Activated T-helper 2 cell treated with anti-CD3 and anti-CD28 coated beads, Interferon-gamma antibody, Interleukin-2, Interleukin-4, amounts not matched to agents 10 μg/mL and 5 μg/mL and 100 μg/mL, durations not matched to agents 14 hours and 24 hours and 36 hours (primary cell): ENCODE measurements at regions of chr6 and their contacts with region 1.

Region 1: DNA sequence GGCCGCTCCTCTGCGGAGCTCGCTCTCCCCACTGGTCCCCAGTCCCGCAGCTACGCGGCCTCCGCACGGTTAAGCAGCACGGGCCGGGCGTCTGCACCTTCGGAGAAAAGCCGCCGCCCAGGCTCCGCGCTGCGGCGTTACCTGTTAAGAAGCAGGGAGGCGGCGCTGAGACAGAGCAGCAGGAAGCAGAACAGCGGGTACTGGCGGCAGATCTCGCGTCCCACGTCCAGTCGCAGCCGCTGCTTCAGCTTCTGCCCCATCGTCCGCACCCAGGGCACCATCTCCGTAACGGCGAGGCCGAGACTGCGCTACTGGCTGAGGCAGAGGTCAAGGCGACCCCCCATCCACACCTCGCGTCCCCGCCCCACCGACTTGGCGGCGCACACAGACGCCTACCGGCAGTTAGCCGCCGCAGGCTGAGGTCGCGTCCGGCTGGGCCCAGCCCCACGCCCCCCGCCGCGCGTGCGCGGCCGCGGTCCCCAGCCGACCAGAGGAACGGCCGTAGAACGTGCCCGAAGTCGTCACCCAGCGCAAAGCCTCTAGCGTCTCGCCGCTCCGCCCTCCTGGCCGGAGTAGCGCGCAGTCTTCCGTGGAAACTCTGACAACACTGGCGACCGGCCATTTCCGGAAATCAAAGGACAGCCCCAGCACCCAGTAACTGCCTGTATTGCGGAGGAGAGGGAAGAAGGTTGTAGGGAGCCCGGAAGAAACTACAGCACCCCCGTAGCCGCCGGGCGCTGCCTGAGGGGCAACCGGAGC is at the start of gene SNX14:
- DNase-seq: peak; percentile 76
- H3K4me3 Mint-ChIP-seq: peak within 1 kb of the TSS; percentile 92
- H3K27ac Mint-ChIP-seq: peak within 1 kb of the TSS; percentile 89
- H3K4me1 Mint-ChIP-seq: peaks cover 17% of the 10 kb centered on the region
- H3K27me3 Mint-ChIP-seq: no peaks in the 10 kb centered on the region
- total RNA-seq, gene SNX14: 57.5 and 59.7 TPM in 2 replicates

Region 2: GRCh38 chr6:85096976-85097375 is 496.6 kb before region 1 on chr6:
- intact Hi-C with region 1: no loop called
- DNase-seq: no peak
- H3K4me3 Mint-ChIP-seq: no peak overlapping the region
- H3K27ac Mint-ChIP-seq: no peak overlapping the region
- H3K4me1 Mint-ChIP-seq: no peaks in the 10 kb centered on the region
- H3K27me3 Mint-ChIP-seq: no peaks in the 10 kb centered on the region

Region 3: GRCh38 chr6:85449818-85450759 is 143.5 kb before region 1 on chr6 and contains the start of gene NT5E:
- intact Hi-C with region 1: loop called (anchors 5 kb)
- DNase-seq: peak; percentile 47
- H3K4me3 Mint-ChIP-seq: peak within 1 kb of the TSS; percentile 96
- H3K27ac Mint-ChIP-seq: peak within 1 kb of the TSS; percentile 88
- H3K4me1 Mint-ChIP-seq: peaks cover 63% of the 10 kb centered on the region
- H3K27me3 Mint-ChIP-seq: peaks cover 18% of the 10 kb centered on the region
- total RNA-seq, gene NT5E: 15.4 and 16.4 TPM in 2 replicates

Region 4: DNA sequence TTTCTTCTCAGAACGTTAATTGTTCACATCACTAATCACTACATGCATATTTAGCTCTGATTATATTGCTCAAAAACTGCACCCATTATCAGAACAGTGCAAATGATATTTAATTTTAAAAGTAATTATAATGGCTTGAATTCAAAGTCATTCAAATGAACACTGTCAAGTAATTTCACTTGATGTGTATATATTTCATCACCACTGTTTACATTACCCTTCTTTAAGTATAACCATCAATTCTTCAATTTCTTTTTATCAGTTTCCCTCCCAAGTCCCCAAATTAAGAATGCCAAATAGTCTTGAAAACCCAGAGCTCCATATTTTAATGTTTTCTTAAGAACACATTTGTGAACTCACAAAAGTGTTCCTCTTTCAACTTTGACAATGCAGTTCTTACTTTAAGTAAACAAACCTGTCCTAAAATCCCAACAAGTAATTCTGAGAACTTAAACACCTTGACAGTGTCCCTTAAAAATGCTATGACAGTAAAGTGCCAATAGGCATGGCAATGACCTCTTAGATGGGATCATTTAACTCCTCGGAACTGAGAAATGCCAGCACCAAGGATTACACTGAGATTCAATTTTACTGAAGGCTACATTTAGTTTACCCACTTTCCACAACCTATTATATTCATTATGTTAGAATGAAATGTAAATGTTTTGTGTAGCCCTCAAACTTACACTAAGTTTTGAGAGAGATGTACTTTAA is 16.7 kb after region 1 on chr6:
- intact Hi-C with region 1: loop called (anchors 2 kb)
- DNase-seq: no peak
- H3K4me3 Mint-ChIP-seq: no peak overlapping the region
- H3K27ac Mint-ChIP-seq: no peak overlapping the region
- H3K4me1 Mint-ChIP-seq: peaks cover 10% of the 10 kb centered on the region
- H3K27me3 Mint-ChIP-seq: no peaks in the 10 kb centered on the region

Region 5: DNA sequence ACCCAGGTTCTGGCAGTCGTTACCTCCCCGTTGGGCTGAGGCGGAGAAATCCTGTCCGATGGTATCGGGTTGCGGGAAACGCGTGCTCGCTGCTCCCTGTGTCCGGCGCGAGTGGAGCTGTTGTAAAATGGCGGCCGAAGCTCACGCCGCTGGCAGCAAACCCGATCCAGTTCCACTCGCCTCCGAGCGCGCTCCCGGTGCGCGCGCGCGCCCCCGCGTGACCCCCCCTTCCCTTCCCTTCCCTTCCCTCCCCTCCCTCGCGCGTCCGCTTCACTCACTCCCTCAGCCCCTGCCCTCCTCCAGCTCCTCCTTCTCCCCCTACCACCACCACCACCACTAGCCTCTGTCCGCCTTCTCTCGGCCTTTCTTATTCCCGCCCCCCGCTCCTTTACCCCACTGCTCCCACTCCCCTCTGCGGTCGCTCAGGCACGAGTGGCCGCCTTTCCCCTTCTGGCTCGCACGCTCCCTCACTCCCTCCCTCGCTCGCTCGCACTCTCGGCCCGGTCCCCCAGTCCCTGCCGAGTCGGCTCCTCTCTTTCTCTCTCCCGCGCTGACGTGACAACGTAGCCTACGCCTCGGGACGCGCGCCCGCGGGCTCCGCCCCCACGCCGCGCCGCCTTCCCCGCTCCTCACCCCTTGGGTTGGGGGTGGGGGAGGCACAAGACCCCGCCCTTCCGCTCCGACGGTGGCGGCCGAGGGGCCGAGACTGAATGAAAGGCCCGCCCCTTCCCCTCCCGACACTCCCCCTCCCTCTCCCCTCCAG is 49.3 kb after region 1 on chr6 and contains the start of gene SYNCRIP:
- intact Hi-C with region 1: loop called (anchors 1 kb)
- DNase-seq: peak; percentile 98
- H3K4me3 Mint-ChIP-seq: peak within 1 kb of the TSS; percentile 97
- H3K27ac Mint-ChIP-seq: peak within 1 kb of the TSS; percentile 100
- H3K4me1 Mint-ChIP-seq: peaks cover 41% of the 10 kb centered on the region
- H3K27me3 Mint-ChIP-seq: peaks cover 4% of the 10 kb centered on the region
- total RNA-seq, gene SYNCRIP: 197 TPM in 2 replicates

Region 6: DNA sequence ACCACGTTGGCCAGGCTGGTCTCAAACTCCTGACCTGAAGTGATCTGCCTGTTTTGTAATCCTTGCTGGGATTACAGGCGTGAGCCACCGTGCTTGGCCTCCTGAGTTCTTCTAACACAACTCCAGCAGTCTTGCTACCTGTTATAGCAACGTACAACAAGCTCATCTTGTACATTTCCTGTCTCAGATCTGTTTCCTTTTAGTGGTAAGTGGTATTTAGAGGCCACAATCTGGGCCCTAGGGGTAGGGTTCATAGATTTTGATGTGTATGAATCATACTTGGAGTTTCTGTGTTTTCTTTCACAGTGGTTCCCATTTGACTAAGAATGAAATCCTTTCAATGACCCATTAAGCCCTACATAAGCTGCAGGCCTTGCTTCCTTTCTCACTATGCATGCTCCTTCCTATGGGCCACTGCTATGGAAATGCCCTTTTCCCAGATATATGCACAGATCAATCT is 76.1 kb after region 1 on chr6:
- intact Hi-C with region 1: loop called (anchors 2 kb)
- DNase-seq: peak; percentile 52
- H3K4me3 Mint-ChIP-seq: peak overlapping the region; percentile 61
- H3K27ac Mint-ChIP-seq: peak overlapping the region; percentile 78
- H3K4me1 Mint-ChIP-seq: peaks cover 55% of the 10 kb centered on the region
- H3K27me3 Mint-ChIP-seq: no peaks in the 10 kb centered on the region

Region 7: DNA sequence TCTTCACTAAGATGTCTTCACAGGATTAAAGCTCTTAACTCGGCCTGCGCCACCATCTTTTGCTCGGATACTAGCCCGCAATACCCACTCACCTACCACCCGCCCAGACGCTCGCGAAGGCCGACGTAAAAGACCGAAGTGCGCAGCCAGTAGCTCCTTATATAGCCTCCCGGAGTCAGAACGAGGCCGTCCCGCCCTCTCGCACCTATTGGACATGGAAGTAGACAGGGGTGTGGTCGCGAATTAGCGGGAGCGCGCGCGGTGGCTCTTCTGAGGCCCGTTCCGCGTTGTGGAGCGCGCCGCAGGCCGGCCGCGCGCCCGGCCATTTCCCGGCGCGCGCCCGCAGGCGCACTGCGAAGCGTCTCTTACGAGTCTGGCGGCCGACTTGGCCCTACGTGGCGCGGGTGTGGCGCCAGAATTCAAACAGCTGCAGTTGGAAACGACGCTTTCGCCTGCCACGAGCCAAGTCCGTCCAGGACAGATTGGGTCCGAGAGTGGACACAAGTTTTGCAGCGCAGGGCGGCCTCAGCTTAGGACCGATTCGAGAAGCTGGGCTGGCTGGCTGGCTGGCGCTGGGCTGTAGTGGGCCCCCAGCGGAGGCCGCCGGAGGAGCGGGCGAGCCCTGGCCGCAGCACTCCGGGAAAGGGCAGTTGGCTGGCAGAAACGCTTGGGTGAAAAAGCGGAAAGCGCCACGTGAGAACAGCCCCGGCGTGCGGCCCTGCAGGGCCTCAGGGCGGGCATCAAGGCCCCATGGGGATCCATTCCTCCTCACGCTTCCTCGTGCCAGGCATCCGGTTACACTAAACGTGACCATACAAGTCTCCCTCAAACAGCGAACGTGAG is 85.2 kb after region 1 on chr6:
- intact Hi-C with region 1: loop called (anchors 1 kb)
- DNase-seq: peak; percentile 98
- H3K4me3 Mint-ChIP-seq: peak overlapping the region; percentile 99
- H3K27ac Mint-ChIP-seq: peak overlapping the region; percentile 84
- H3K4me1 Mint-ChIP-seq: peaks cover 39% of the 10 kb centered on the region
- H3K27me3 Mint-ChIP-seq: no peaks in the 10 kb centered on the region